HepG2 (cell line): ENCODE measurements at regions of chr11 and their contacts with region 1.

Region 1: DNA sequence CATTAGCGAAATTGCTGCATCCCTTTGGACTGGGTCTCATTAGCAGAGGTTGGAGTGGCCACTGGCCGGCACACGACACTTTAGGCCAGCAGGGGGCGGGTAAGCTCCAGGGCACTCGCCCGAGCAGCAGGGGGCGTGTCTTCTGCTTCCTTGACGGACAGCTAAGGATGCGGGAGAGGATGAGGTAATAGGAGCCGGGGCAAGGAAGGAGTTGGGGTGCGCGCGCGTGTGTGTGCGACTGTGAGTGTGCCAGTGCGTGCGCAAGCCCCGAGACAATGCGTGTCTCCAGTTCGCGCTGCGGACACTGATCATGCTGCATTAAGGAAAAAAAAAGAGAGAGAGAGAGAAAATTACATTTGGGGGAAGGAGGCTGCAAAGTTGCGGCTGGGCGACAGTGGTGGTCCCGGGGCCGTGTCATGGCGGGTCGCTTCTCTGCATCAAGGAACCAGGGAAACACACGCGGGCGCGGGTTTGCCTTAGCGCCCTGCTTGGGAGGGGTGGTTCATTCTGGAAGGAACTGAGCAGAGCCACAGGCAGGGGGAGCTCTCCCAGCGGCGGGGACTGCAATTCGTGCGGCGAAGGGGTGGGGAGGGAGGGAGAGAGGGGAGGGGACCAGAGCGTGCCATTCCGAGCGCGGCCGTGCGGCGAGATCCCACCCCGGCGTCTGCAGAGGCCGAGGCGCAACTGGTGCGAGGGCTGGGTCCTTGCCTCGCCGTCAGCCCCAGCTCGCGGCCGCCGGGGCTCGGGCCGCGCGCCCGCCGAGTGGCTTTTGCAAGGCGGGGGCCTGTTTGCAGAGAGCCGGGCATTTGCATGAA is at the start of gene DTX4:
- DNase-seq: peak; percentile 81
- ATAC-seq: peak; percentile 76
- H3K4me3 ChIP-seq: peak within 1 kb of the TSS; percentile 67 to 80 (median 68)
- H3K27ac ChIP-seq: no peak within 1 kb of the TSS
- H3K4me1 ChIP-seq: peaks cover 41% of the 10 kb centered on the region
- H3K27me3 ChIP-seq: no peaks in the 10 kb centered on the region; a peak in 1 of 5 replicates
- CTCF ChIP-seq: peak; percentile 91
- EP300 ChIP-seq: no peak
- POLR2A ChIP-seq: no peak
- RAD21 ChIP-seq: peak; percentile 92
- total RNA-seq, gene DTX4: 5.6 and 6.9 TPM in 2 replicates

Region 2: GRCh38 chr11:59062602-59063529 is 108.8 kb before region 1 on chr11:
- CTCF ChIA-PET with region 1: no interaction called
- POLR2A ChIA-PET with region 1: no interaction called
- in situ Hi-C with region 1: no loop called
- intact Hi-C with region 1: no loop called
- DNase-seq: no peak
- ATAC-seq: no peak
- H3K4me3 ChIP-seq: no peak overlapping the region
- H3K27ac ChIP-seq: no peak overlapping the region
- H3K4me1 ChIP-seq: no peaks in the 10 kb centered on the region
- H3K27me3 ChIP-seq: peaks cover 0 to 3% of the 10 kb centered on the region in 2 experiments; a peak in 1 of 5 replicates
- CTCF ChIP-seq: no peak
- EP300 ChIP-seq: no peak
- POLR2A ChIP-seq: no peak
- RAD21 ChIP-seq: no peak

Region 3: DNA sequence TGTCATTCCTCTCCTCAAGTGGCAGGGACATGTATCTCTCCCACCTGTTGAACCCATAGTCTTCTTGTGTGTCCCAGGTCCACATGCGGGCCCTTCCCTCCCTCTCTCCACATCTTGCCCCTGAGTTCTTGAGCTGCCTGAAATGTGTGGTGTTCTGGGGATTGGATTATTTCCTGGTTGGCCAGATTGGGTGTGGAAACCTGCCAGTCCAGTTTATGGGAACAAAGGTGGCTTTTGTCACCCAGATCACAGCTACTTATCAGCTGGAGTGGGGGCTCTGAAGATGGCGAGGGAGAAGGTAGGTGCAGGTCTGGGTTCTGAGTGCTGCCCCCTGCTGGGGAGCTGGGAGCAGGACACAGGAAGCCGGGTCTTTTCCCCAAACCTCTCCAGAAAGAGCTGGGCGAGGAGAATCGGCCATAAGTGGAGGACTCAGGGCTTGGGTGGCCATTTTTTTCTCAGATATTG is 14.4 kb after region 1 on chr11:
- CTCF ChIA-PET with region 1: interaction called, 45 read pairs
- POLR2A ChIA-PET with region 1: interaction called, 46 read pairs
- in situ Hi-C with region 1: no loop called
- intact Hi-C with region 1: loop called (anchors 1 kb)
- DNase-seq: peak; percentile 50
- ATAC-seq: peak; percentile 82
- H3K4me3 ChIP-seq: no peak overlapping the region
- H3K27ac ChIP-seq: no peak overlapping the region
- H3K4me1 ChIP-seq: peaks cover 22% of the 10 kb centered on the region
- H3K27me3 ChIP-seq: no peaks in the 10 kb centered on the region
- CTCF ChIP-seq: peak; percentile 58
- EP300 ChIP-seq: no peak
- POLR2A ChIP-seq: no peak
- RAD21 ChIP-seq: peak; percentile 34; the same call in 1 of the 2 replicates

Region 4: GRCh38 chr11:59201353-59201752 is 29.6 kb after region 1 on chr11:
- CTCF ChIA-PET with region 1: interaction called, 77 read pairs
- POLR2A ChIA-PET with region 1: interaction called, 4 read pairs
- in situ Hi-C with region 1: loop called (anchors 5 kb)
- intact Hi-C with region 1: loop called (anchors 1 kb)
- DNase-seq: peak; percentile 21
- ATAC-seq: peak; percentile 71
- H3K4me3 ChIP-seq: no peak overlapping the region
- H3K27ac ChIP-seq: no peak overlapping the region
- H3K4me1 ChIP-seq: peaks cover 9% of the 10 kb centered on the region; the same call in 1 of the 2 replicates
- H3K27me3 ChIP-seq: no peaks in the 10 kb centered on the region
- CTCF ChIP-seq: peak; percentile 62
- EP300 ChIP-seq: no peak
- POLR2A ChIP-seq: no peak
- RAD21 ChIP-seq: no peak

Region 5: GRCh38 chr11:59207988-59208451 is 36.3 kb after region 1 on chr11:
- CTCF ChIA-PET with region 1: interaction called, 77 read pairs
- POLR2A ChIA-PET with region 1: interaction called, 4 read pairs
- in situ Hi-C with region 1: loop called (anchors 5 kb)
- intact Hi-C with region 1: loop called (anchors 1 kb)
- DNase-seq: peak; percentile 48
- ATAC-seq: peak; percentile 67
- H3K4me3 ChIP-seq: no peak overlapping the region
- H3K27ac ChIP-seq: no peak overlapping the region
- H3K4me1 ChIP-seq: no peaks in the 10 kb centered on the region
- H3K27me3 ChIP-seq: no peaks in the 10 kb centered on the region
- CTCF ChIP-seq: peak; percentile 84
- EP300 ChIP-seq: no peak
- POLR2A ChIP-seq: no peak
- RAD21 ChIP-seq: peak; percentile 60

Region 6: GRCh38 chr11:59224351-59224928 is 52.7 kb after region 1 on chr11:
- CTCF ChIA-PET with region 1: no interaction called
- POLR2A ChIA-PET with region 1: no interaction called
- in situ Hi-C with region 1: no loop called
- intact Hi-C with region 1: no loop called
- DNase-seq: no peak
- ATAC-seq: no peak
- H3K4me3 ChIP-seq: no peak overlapping the region
- H3K27ac ChIP-seq: no peak overlapping the region
- H3K4me1 ChIP-seq: no peaks in the 10 kb centered on the region
- H3K27me3 ChIP-seq: peaks cover 0 to 2% of the 10 kb centered on the region in 2 experiments; a peak in 1 of 5 replicates
- CTCF ChIP-seq: no peak
- EP300 ChIP-seq: no peak
- POLR2A ChIP-seq: no peak
- RAD21 ChIP-seq: no peak

Region 7: DNA sequence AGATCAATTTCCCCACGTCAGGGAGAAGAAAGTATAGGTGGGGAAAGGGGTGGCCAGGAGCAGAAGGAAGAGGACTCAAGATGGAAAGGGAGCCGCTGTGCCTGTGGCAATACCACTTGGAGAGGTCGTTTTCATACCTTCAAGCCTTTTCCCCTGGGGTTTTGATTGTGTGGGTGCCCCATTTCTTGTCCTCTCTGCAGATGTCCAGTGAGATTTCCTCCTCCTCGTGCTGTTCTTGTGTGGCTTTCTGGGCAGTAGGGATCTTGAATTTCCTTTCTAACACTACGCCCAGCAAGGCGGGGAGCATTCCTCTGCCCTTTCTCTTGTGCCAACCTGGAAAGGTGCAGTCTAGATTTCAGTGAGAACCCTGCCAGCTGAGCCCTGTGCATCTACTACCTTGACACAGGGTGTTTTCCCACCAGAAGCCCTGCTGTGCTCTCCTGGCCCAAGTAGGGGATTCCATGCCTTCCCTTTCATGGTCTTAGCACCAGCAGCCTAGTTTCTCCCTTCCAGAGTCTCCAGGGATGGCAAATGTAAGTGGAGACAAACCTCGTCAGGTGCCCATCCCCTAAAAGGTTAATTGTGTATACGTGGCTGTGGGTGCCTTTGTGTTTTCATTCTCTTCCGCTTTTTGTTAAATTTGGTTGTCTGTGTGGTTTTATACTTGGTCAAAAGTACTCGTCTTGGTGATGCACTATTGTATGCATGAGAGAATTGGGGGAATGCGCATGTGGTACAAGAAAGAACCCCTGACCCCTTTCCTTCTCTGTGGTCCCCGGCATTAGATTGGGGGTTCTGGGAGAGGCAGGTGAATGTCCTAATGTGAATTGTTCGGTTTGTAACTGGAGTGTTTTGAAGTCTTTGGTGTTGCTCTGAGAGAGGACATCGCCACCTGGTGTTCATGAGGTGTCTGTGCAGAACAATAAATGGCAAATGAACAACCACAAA is 112.4 kb after region 1 on chr11:
- CTCF ChIA-PET with region 1: interaction called, 20 read pairs
- POLR2A ChIA-PET with region 1: no interaction called
- in situ Hi-C with region 1: loop called (anchors 10 kb)
- intact Hi-C with region 1: loop called (anchors 1 kb)
- DNase-seq: peak; percentile 40
- ATAC-seq: peak; percentile 79
- H3K4me3 ChIP-seq: no peak overlapping the region
- H3K27ac ChIP-seq: no peak overlapping the region
- H3K4me1 ChIP-seq: no peaks in the 10 kb centered on the region
- H3K27me3 ChIP-seq: no peaks in the 10 kb centered on the region
- CTCF ChIP-seq: peak; percentile 78
- EP300 ChIP-seq: no peak
- POLR2A ChIP-seq: no peak
- RAD21 ChIP-seq: no peak

Region 8: GRCh38 chr11:59429924-59430516 is 258.3 kb after region 1 on chr11:
- CTCF ChIA-PET with region 1: interaction called, 9 read pairs
- POLR2A ChIA-PET with region 1: no interaction called
- in situ Hi-C with region 1: no loop called
- intact Hi-C with region 1: loop called (anchors 1 kb)
- DNase-seq: peak; percentile 53
- ATAC-seq: peak; percentile 73
- H3K4me3 ChIP-seq: no peak overlapping the region
- H3K27ac ChIP-seq: no peak overlapping the region
- H3K4me1 ChIP-seq: no peaks in the 10 kb centered on the region
- H3K27me3 ChIP-seq: no peaks in the 10 kb centered on the region
- CTCF ChIP-seq: peak; percentile 79
- EP300 ChIP-seq: no peak
- POLR2A ChIP-seq: no peak
- RAD21 ChIP-seq: no peak